PC-9 (cell line): ENCODE measurements at regions of chr7 and their contacts with region 1.

Region 1: GRCh38 chr7:28674359-28674782 is 262.1 kb downstream of the CREB5 start:
- DNase-seq: peak; percentile 16 to 88
- H3K4me3 ChIP-seq: peak overlapping the region; percentile 1; the same call in 1 of the 2 replicates
- H3K27ac ChIP-seq: peak overlapping the region; percentile 68
- H3K4me1 ChIP-seq: peaks cover 20% of the 10 kb centered on the region
- H3K27me3 ChIP-seq: no peaks in the 10 kb centered on the region
- CTCF ChIP-seq: no peak

Region 2: DNA sequence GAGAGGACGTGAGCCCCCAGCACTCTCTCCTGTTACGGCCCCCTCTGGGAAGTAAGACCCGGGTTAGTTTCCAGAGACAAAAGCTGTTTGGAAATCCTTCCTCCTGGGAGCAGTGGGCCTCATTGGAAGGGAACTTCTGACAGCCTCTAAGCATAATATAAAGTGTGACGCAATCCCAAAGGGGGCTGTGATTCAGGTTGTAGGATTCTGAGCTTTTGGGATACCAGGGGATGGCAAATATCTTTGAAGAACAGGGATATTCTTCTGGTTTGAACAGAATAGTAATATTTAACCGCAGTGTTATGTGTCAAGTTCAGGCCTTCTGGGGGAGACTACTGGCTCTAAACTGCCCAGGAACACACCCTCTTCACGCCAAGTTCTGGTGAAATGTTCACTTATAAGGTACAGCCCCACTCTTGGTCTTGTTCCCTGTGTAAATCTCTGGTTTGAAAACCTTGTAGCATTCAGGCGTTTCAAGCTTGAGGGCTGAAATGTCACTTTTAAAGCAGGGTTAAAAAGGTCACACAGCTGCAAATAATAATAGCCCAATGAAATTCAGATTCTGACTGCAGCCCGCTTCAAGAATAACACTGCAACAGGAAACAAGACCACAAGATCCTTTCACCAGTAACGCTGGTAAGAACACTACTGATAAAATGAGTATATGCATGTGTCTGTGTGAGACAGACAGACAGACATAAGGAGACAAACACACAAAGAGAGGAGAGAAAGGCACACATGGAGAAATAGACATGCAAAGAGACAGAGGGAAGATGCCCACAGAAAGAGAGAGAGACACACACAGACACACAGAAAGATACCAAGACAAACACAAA is 193.1 kb before region 1 on chr7:
- CTCF ChIA-PET with region 1: no interaction called
- POLR2A ChIA-PET with region 1: no interaction called
- intact Hi-C with region 1: no loop called
- DNase-seq: no peak
- H3K4me3 ChIP-seq: no peak overlapping the region
- H3K27ac ChIP-seq: no peak overlapping the region
- H3K4me1 ChIP-seq: no peaks in the 10 kb centered on the region
- H3K27me3 ChIP-seq: no peaks in the 10 kb centered on the region
- CTCF ChIP-seq: no peak

Region 3: DNA sequence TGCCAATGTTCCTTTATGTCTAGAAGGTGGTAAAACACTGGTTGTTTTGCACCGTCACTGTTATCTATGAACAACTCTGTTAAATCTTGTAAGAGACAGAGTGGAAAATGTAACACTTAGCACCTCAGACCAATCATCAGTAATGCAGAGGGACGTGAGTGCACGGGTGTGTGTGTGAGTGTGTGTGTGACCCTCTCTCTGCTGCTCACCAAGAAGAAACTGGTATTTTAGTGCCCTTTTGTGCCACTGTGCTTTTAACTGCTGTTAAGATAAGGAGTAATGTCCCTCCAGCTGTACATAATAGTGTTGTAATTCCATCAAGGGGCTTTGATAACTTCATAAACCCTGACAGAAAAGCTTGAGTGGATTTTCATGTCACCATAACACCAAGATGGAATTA is 132.0 kb before region 1 on chr7:
- CTCF ChIA-PET with region 1: no interaction called
- POLR2A ChIA-PET with region 1: no interaction called
- intact Hi-C with region 1: no loop called
- DNase-seq: no peak
- H3K4me3 ChIP-seq: no peak overlapping the region
- H3K27ac ChIP-seq: no peak overlapping the region
- H3K4me1 ChIP-seq: no peaks in the 10 kb centered on the region
- H3K27me3 ChIP-seq: no peaks in the 10 kb centered on the region
- CTCF ChIP-seq: no peak

Region 4: GRCh38 chr7:28685644-28686417 is 11.5 kb after region 1 on chr7:
- CTCF ChIA-PET with region 1: no interaction called
- POLR2A ChIA-PET with region 1: no interaction called
- intact Hi-C with region 1: loop called (anchors 1 kb)
- DNase-seq: peak; percentile 90 to 97
- H3K4me3 ChIP-seq: peak overlapping the region; percentile 64
- H3K27ac ChIP-seq: peak overlapping the region; percentile 80
- H3K4me1 ChIP-seq: peaks cover 49% of the 10 kb centered on the region
- H3K27me3 ChIP-seq: no peaks in the 10 kb centered on the region
- CTCF ChIP-seq: no peak